ENCODE measurements at regions of chr9 and their contacts with region 1.

Region 1: DNA sequence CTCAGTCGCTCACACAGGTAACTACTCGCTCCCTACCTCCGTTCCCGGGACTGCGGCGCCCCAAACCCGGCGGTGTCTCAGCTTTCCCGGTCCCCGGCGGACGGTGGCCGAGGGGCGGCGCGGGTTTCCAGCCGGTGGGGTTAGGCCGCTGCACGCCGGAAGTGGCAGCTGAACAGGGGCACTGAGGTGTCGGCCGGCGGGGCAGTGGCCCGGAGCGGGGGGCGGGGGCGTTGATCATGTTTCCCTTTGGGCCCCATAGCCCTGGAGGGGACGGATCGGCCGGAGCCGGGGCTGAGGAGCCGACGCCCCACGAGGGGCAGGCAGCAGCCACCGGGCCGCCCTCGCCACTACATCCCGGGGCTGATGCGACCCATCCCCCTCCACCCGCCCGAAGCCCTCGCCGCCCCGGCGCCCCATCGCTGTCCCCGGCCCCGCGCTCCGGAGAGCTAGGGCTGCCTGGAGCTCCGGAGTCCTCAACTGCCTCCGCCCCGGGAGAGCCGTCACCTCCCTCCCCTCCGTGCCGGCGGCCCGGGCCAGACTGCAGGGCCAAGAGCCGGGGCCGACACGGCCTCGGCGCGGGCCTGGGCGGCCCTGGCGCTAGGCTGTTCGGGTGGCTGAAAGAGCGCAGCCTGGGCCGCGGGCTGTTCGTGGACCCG is at the start of gene DCAF10:
- DNase-seq: peak; percentile 94
- ATAC-seq: peak; percentile 85
- H3K4me3 ChIP-seq: peak within 1 kb of the TSS; percentile 82 to 89 (median 85)
- H3K4me3 Mint-ChIP-seq: peak within 1 kb of the TSS; percentile 95
- H3K27ac ChIP-seq: peak within 1 kb of the TSS; percentile 67 to 89
- H3K27ac Mint-ChIP-seq: peak within 1 kb of the TSS; percentile 94
- H3K4me1 ChIP-seq: peaks cover 19 to 30% of the 10 kb centered on the region in 2 donors
- H3K4me1 Mint-ChIP-seq: peaks cover 37% of the 10 kb centered on the region
- H3K27me3 ChIP-seq: no peaks in the 10 kb centered on the region
- H3K27me3 Mint-ChIP-seq: no peaks in the 10 kb centered on the region
- CTCF ChIP-seq: no peak
- total RNA-seq, gene DCAF10: 22.1 and 22.5 TPM in 2 replicates

Region 2: DNA sequence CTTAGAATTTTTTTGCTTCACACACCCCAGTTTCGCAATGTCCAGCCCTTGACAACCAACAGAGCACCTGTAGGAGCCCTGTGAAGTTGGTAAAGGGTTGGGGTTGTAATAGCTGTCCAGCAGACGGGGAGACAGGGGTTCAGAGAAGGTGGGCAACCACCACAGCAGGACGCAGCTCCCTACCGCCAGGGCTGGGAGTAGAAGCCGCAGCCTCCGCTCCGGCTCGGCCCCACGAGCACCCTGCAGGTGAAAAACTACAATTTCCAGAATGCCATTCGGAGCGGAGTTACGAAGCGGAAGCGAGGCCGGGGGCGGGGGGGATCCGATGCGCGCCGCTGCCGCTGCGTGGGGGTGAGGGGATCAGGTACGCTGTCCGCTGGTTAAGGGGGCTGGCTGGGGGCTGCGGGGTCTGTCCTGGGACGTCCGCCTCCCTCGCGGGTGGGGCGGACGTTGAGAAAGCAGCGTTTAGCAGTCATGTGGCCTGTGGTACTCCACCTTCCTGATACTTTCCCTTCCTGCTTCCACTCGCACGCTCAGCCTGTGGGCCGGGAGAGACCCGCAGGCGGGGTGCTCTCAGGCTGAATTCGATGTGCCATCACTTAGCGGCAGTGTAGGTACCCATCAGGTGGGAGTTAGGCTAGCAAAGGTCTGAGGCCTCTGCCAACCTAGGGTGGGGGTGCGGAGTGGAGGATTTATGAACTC is 47.1 kb before region 1 on chr9 and contains the start of gene TRMT10B:
- CTCF ChIA-PET with region 1: no interaction called
- POLR2A ChIA-PET with region 1: no interaction called
- intact Hi-C with region 1: loop called (anchors 1 kb)
- DNase-seq: peak; percentile 83
- ATAC-seq: peak; percentile 90
- H3K4me3 ChIP-seq: peak within 1 kb of the TSS; percentile 48 to 96 (median 84)
- H3K4me3 Mint-ChIP-seq: peak within 1 kb of the TSS; percentile 98
- H3K27ac ChIP-seq: peak within 1 kb of the TSS; percentile 80 to 81
- H3K27ac Mint-ChIP-seq: peak within 1 kb of the TSS; percentile 93
- H3K4me1 ChIP-seq: peaks cover 14 to 16% of the 10 kb centered on the region in 2 donors
- H3K4me1 Mint-ChIP-seq: peaks cover 23% of the 10 kb centered on the region
- H3K27me3 ChIP-seq: no peaks in the 10 kb centered on the region
- H3K27me3 Mint-ChIP-seq: no peaks in the 10 kb centered on the region
- CTCF ChIP-seq: no peak
- total RNA-seq, gene TRMT10B: 27.8 and 28.4 TPM in 2 replicates

Region 3: GRCh38 chr9:37784616-37785483 is 15.9 kb before region 1 on chr9 and contains the start of gene EXOSC3:
- CTCF ChIA-PET with region 1: interaction called, 5 read pairs
- POLR2A ChIA-PET with region 1: interaction called, 17 read pairs
- intact Hi-C with region 1: loop called (anchors 1 kb)
- DNase-seq: peak; percentile 91
- ATAC-seq: peak; percentile 86
- H3K4me3 ChIP-seq: peak within 1 kb of the TSS; percentile 75 to 96 (median 87)
- H3K4me3 Mint-ChIP-seq: peak within 1 kb of the TSS; percentile 98
- H3K27ac ChIP-seq: peak within 1 kb of the TSS; percentile 69 to 86
- H3K27ac Mint-ChIP-seq: peak within 1 kb of the TSS; percentile 95
- H3K4me1 ChIP-seq: peaks cover 16 to 21% of the 10 kb centered on the region in 2 donors
- H3K4me1 Mint-ChIP-seq: peaks cover 33% of the 10 kb centered on the region
- H3K27me3 ChIP-seq: peaks cover 0 to 2% (median 0%) of the 10 kb centered on the region in 4 experiments
- H3K27me3 Mint-ChIP-seq: peaks cover 9% of the 10 kb centered on the region
- CTCF ChIP-seq: peak; percentile 26
- total RNA-seq, gene EXOSC3: 55.3 and 64.9 TPM in 2 replicates

Region 4: GRCh38 chr9:38026021-38026809 is 225.5 kb after region 1 on chr9:
- CTCF ChIA-PET with region 1: no interaction called
- POLR2A ChIA-PET with region 1: no interaction called
- intact Hi-C with region 1: no loop called
- DNase-seq: no peak
- ATAC-seq: no peak
- H3K4me3 ChIP-seq: no peak overlapping the region
- H3K4me3 Mint-ChIP-seq: no peak overlapping the region
- H3K27ac ChIP-seq: no peak overlapping the region
- H3K27ac Mint-ChIP-seq: no peak overlapping the region
- H3K4me1 ChIP-seq: peaks cover 0 to 5% of the 10 kb centered on the region in 2 donors
- H3K4me1 Mint-ChIP-seq: peaks cover 6% of the 10 kb centered on the region
- H3K27me3 ChIP-seq: no peaks in the 10 kb centered on the region
- H3K27me3 Mint-ChIP-seq: peaks cover 7% of the 10 kb centered on the region
- CTCF ChIP-seq: no peak

Measured in B cell (primary cell).